ENCODE measurements at regions of chr2 and their contacts with region 1.

Region 1: DNA sequence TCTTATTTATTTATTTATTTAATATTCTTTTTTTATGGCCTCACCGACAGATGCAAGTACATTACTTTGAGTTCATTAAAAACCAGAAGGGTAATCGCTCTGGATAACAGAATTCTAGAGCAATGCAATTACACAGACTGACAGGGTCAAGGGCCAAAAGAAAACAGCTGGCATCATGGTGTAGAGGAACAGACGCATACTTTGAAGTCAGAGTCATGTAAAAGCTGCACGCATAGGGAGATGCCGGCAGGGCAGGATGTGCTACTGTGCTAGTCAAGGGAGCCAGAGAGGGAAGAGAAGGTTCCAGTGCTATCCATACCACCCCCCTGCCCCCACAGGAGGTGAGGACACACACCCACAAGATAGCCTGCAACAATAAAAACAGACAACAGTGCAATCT is 115.2 kb upstream of the TFCP2L1 start:
- DNase-seq: no peak
- ATAC-seq: no peak

Region 2: GRCh38 chr2:121710470-121711170 is 310.4 kb after region 1 on chr2:
- intact Hi-C with region 1: loop called in 1 of 2 experiments (anchors 10 kb)
- DNase-seq: no peak
- ATAC-seq: no peak

Region 3: GRCh38 chr2:121722479-121722878 is 322.3 kb after region 1 on chr2:
- intact Hi-C with region 1: loop called (anchors 2 to 10 kb)
- DNase-seq: no peak
- ATAC-seq: peak in 1 of 2 donors; percentile 87

Measured in left cardiac atrium (tissue), 4 donors.